H1 (cell line): ENCODE measurements at regions of chr9 and their contacts with region 1.

Region 1: GRCh38 chr9:95264954-95265615 is 52.4 kb downstream of the FANCC start:
- DNase-seq: no peak
- H3K4me3 ChIP-seq: no peak overlapping the region
- H3K27ac ChIP-seq: no peak overlapping the region
- H3K4me1 ChIP-seq: peaks cover 0 to 2% (median 0%) of the 10 kb centered on the region in 4 experiments; a peak in 3 of 7 replicates
- H3K27me3 ChIP-seq: no peaks in the 10 kb centered on the region
- CTCF ChIP-seq: peak in 2 of 3 experiments; percentile 21 to 32; a peak in 2 of 4 replicates
- EP300 ChIP-seq: no peak
- POLR2A ChIP-seq: no peak
- RAD21 ChIP-seq: peak; percentile 52 to 54

Region 2: DNA sequence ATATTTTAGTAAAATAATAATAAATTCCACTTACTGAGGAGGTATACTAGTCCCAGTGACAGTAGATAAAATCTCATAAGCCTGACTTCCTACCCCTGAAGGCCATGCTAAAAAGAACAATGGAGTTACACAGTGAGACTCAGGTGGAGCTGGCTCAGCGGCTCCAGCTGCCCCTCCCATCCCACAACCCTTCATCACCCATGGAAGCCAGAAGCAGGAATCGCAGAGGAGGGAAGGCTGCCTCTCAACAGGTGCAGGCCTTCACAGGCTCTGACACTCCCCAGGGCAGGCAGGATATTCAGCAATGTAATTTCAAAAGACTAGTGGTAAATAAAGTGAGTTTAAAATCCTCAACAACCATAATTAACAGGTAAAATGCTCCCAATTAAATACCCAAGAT is 15.1 kb before region 1 on chr9:
- CTCF ChIA-PET with region 1: interaction called, 22 read pairs
- POLR2A ChIA-PET with region 1: no interaction called
- DNase-seq: no peak
- H3K4me3 ChIP-seq: no peak overlapping the region
- H3K27ac ChIP-seq: no peak overlapping the region
- H3K4me1 ChIP-seq: peaks cover 0 to 4% (median 0%) of the 10 kb centered on the region in 4 experiments; a peak in 1 of 7 replicates
- H3K27me3 ChIP-seq: no peaks in the 10 kb centered on the region
- CTCF ChIP-seq: no peak
- EP300 ChIP-seq: no peak
- POLR2A ChIP-seq: no peak
- RAD21 ChIP-seq: no peak